Cardiac septum (tissue), 1 donor: ENCODE measurements at regions of chr5 and their contacts with region 1.

Region 1: DNA sequence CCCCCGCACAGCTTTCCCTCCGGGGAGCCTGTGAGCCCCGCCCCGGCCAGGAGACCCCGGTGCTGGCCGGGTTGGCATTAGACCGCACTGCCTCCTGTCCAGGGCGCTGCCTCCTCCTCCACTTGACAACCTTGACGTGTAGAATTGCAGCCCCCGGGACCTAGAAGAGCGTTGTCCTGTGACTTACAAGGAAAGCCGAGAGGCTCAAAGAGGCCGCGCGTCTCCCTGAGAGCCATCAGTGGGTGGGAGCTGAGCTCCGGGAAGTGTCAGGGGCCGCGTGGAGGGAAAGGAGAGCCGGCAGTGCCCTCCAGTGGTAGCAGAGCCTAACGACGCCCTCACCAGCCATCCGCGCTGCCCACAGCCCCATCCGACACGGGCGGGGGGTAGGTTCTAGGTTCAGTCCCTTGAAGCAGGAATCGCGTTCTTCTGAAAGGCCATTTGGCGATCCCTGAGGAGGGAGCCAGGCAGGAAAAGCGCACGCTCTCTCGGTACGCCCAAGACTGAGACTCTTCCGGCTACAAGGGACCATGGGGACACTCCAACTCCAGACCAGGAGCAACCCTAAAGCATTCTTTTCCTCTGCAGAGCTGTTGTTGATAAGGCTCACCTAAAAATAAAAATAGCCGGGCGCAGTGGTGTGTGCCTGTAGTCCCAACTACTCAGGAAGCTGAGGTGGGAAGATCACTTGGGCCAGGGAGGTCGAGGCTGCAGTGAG is 40.6 kb upstream of the SAP30L start:
- DNase-seq: peak; percentile 90

Region 2: DNA sequence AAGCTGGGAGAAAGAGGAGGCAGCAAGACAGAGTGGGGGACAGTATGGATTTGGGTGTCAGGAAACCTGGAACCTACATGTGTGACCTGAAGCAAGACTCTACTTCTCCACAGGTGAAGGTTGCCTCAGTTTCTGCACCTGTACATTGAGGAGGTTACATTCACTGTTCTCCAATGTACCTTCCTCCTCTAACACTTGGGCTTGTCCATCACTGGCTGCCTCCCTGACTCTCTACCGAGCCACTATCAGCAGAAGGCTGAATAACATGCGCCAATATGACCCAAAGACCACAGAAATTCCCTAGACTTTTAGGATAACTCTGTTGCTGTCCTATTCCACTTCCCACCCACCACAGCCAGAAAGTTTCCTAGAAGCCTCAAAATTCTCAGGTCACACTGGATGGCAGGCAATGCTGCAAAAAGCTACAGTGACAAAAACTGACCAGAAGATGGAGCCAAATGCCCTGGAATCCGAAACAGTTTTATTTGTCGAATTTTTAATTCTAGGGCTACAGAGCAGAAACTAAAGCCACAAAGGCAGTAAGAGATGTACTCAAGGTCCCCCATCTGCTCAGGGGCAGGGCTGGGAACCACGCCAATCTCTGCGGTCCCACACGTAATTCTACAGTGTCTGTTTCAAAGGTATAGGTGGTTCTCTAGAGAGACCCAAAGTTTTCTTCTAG is 431.0 kb before region 1 on chr5:
- intact Hi-C with region 1: loop called (anchors 10 kb)
- DNase-seq: no peak

Region 3: DNA sequence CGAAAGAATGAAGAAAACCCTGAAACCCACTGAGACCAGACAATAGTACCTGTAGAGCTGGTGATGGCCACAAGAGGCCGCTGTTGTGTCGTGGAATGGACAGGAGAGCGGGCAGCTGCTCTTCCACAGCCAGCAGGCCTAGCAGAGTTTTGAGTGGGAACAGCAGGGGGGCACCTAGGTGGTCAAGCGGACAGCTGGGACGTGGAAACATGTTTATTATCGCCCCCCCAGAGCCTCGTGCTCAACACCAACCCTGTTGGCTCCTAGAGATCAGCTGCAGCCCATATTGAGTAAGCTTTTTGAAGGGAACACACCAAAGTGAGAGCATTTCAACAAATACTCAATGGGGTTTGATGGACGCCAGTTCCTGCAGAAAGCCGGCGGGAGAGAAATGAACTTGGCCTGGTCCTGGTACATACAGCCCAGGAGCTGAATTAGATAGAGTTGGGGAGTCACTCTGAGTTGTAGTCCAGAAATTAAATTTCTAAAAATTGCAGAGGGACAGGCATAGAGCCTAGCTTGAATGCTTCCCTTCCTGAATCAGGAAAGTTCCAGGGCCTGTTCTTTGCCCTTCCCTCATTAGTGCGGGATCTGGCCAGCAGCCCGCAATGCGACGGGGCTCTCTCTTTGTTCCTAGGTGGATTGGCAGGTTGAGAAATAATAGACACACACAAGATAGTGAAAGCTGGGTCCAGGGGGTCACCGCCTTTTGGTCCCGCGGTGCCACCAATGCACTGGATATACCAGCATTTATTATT is 332.6 kb before region 1 on chr5:
- intact Hi-C with region 1: loop called (anchors 1 kb)
- DNase-seq: peak; percentile 90

Region 4: DNA sequence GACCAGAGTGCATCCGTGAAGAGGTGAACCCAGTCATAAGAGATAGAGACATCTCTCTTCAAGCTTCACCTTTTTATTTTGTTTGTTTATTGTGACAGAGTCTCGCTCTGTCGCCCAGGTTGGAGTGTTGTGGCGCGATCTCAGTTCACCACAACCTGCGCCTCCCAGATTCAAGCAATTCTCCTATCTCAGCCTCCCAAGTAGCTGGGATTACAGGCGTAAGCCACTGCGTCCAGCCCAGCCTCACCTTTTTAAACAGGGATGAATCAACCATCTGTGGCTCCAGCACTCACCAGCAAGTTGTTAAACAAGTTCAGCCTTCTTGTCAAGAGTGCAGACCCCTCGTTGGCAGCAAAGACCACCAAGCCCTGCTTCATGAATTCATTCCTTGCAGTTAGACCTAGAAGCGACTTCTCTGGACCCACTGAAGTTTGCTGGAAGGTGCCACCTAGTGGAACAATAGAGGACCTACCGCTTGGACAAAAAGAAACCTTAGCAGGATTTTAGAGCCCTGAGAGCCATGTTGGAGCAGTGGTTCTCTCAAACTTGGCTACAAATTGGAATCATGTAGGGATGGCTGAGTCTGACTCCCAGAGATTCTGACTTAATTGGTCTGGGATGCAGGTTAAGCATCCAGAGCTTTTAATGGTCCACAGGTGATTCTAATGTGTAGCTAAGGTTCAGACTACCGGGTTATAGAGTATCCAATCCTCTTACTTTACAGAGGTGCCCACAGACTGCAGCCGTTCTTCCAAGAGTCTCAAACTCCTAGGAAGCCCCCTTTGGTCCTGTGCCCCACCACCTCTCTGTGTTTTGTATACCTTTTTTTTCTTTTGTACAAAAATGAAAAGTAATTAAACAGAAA is 225.2 kb before region 1 on chr5:
- intact Hi-C with region 1: loop called (anchors 1 kb)
- DNase-seq: no peak

Region 5: GRCh38 chr5:154189819-154190594 is 215.2 kb before region 1 on chr5:
- intact Hi-C with region 1: loop called (anchors 5 kb)
- DNase-seq: peak; percentile 92

Region 6: DNA sequence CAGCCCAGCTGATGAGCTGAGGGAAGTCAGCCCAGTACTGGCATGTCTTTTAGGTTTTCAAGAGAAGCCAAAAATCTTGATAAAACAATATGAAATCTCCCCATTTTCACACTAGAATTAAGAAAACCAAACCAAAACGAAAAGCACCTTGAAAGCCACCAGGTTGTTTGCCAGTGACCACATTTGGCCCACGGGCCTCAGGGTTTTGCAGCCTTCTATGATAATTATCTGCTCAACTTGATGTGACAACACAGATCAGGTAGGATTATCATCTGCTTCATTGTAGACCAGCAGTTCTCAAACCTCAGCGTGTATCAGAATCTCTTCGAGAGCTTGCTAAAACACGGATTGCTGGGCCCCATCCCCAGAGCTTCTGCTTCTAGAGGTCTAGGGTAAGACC is 113.3 kb before region 1 on chr5:
- intact Hi-C with region 1: loop called (anchors 5 kb)
- DNase-seq: no peak

Region 7: GRCh38 chr5:154478224-154478565 is 73.0 kb after region 1 on chr5 and contains the start of gene HAND1:
- intact Hi-C with region 1: no loop called
- DNase-seq: peak; percentile 92
- total RNA-seq, gene HAND1: 18.3 TPM

Region 8: GRCh38 chr5:154686490-154686889 is 281.3 kb after region 1 on chr5:
- intact Hi-C with region 1: no loop called
- DNase-seq: no peak